Endothelial cell of umbilical vein (primary cell): ENCODE measurements at regions of chr2 and their contacts with region 1.

Region 1: DNA sequence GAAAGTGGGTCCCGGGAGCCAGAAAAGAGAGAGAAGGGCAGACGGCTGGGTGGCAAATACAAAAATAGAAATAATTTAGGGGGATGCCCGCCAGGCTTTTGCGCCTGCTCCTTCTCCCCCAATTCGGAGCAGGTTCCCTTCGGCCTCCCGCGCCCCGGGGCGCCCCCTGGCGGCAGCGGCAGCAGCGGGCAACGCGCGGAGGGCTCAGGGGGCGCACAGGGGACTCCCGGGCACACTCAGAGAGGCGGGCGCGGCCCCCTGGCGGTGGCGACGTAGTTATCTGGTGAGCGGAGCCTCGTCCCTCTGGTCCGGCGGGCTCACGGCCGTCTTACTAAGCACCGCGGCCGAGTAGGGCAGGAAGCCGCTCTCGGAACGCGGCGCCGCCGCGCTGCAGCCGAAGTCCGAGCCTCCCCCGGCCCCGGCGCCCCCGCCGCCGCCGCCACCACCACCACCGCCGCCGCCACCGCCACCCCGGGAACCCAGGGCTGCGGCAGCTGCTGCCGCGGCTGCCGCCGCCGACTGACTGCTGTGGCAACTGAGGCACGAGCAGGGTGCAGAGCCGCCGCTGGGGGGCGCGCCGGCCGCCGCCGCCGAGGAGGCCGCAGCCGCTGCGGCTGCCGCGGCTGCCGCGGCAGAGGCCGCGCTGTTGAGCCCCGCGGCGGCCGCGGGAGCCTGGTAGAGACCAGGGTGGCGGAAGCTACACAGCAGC is 3.8 kb downstream of the EVX2 start:
- DNase-seq: no peak
- H3K4me3 ChIP-seq: no peak overlapping the region
- H3K27ac ChIP-seq: no peak overlapping the region
- H3K4me1 ChIP-seq: no peaks in the 10 kb centered on the region
- H3K27me3 ChIP-seq: peaks cover 80 to 97% of the 10 kb centered on the region in 2 experiments
- CTCF ChIP-seq: peak; percentile 81 to 82
- POLR2A ChIP-seq: no peak

Region 2: GRCh38 chr2:175366815-175367214 is 713.2 kb before region 1 on chr2:
- CTCF ChIA-PET with region 1: interaction called, 10 read pairs
- POLR2A ChIA-PET with region 1: no interaction called
- dilution Hi-C with region 1: no loop called
- intact Hi-C with region 1: no loop called
- DNase-seq: peak; percentile 70
- H3K4me3 ChIP-seq: no peak overlapping the region
- H3K27ac ChIP-seq: no peak overlapping the region
- H3K4me1 ChIP-seq: no peaks in the 10 kb centered on the region
- H3K27me3 ChIP-seq: peaks cover 5 to 34% of the 10 kb centered on the region in 2 experiments
- CTCF ChIP-seq: peak; percentile 74 to 75
- POLR2A ChIP-seq: no peak

Region 3: DNA sequence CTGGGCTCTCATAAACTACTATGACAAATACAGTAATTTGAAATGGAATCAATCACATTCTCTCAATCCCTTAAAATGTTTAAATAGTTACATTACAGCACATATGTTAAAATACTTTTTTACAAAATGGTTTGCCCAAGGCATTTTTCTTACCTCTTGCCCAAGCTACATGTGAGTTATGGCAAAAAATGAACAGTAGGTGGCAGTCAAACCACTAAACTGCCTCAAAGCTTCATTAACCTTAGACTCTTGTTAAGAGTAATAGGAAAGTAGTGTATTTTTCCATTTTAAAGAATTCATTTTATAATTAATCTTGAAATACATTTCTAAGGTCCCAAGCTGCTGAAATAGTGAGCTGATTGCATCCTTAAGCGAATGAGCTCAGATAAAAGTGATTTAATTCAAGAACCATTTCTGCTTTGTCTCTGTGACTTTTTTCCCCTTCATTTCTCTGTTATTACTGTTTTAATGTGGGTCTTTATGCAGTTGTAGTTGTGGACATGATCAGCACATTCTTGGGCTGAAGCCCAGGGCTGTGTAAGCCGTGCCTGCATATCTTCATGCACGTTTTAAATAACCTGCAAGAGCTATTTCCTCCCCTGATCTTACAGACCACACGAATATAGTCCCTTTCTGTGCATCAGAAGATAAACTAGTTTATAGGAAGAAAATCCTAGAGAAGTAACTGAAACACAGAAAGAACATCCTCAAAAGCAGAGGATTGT is 389.7 kb before region 1 on chr2:
- CTCF ChIA-PET with region 1: interaction called, 102 read pairs
- POLR2A ChIA-PET with region 1: no interaction called
- dilution Hi-C with region 1: no loop called
- intact Hi-C with region 1: no loop called
- DNase-seq: peak; percentile 81
- H3K4me3 ChIP-seq: no peak overlapping the region
- H3K27ac ChIP-seq: no peak overlapping the region
- H3K4me1 ChIP-seq: no peaks in the 10 kb centered on the region
- H3K27me3 ChIP-seq: peaks cover 2 to 4% of the 10 kb centered on the region in 2 experiments
- CTCF ChIP-seq: peak; percentile 42 to 54
- POLR2A ChIP-seq: no peak

Region 4: GRCh38 chr2:176001916-176002687 is 77.9 kb before region 1 on chr2 and contains the start of gene LNPK:
- CTCF ChIA-PET with region 1: no interaction called
- POLR2A ChIA-PET with region 1: no interaction called
- dilution Hi-C with region 1: no loop called
- intact Hi-C with region 1: loop called (anchors 2 kb)
- DNase-seq: peak; percentile 91
- H3K4me3 ChIP-seq: peak within 1 kb of the TSS; percentile 58 to 83 (median 79)
- H3K27ac ChIP-seq: peak within 1 kb of the TSS; percentile 10
- H3K4me1 ChIP-seq: peaks cover 17% of the 10 kb centered on the region
- H3K27me3 ChIP-seq: peaks cover 0 to 2% of the 10 kb centered on the region in 2 experiments
- CTCF ChIP-seq: no peak
- POLR2A ChIP-seq: peak; percentile 96
- total RNA-seq, gene LNPK: 11.2 and 11.8 TPM in 2 replicates

Region 5: DNA sequence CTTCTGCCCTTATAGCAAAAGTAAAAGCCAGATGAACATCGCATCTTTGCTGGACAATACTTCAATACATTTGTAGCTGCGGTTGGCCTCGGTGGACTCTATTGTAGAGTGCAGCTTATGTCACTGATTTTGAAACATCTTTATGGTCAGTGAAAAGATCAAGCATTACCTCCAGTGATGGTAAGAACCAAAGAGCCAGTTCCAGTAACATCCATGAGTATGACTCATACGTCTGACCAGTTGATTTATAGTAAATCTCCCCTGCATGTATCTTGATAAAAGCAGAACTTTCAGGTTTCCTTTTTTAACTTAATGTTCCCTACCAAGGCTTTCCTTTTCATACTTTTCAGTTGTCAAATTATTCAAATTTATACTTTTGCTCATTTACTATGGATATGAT is 1013.4 kb after region 1 on chr2:
- CTCF ChIA-PET with region 1: no interaction called
- POLR2A ChIA-PET with region 1: no interaction called
- dilution Hi-C with region 1: no loop called
- intact Hi-C with region 1: no loop called
- DNase-seq: no peak
- H3K4me3 ChIP-seq: no peak overlapping the region
- H3K27ac ChIP-seq: no peak overlapping the region
- H3K4me1 ChIP-seq: peaks cover 9% of the 10 kb centered on the region
- H3K27me3 ChIP-seq: peaks cover 0 to 1% of the 10 kb centered on the region in 2 experiments
- CTCF ChIP-seq: no peak
- POLR2A ChIP-seq: no peak